Common myeloid progenitor, CD34-positive (primary cell): ENCODE measurements at regions of chr11 and their contacts with region 1.

Region 1: DNA sequence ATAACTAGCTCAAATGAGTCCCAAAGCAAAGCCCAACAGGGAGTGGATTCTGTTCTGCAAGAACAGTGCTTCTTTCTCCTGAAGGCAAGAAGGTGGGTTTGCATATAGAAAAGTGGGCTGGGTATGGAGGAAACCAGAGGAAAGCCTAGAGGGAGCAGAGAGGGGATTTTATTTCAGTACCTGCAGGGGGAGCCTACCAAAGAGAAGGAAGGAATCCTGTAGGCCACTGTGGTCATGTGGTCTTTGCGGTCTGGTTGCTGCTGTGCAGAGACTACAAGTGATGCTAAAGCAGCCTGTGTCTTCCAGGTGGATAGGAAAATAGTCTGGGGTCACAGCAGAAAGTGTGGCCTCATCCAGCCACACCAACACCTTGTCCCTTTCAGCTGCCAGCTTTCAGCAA is 33.2 kb upstream of the ZBTB16 start:
- DNase-seq: peak; percentile 76 to 87 (median 87)
- H3K4me3 ChIP-seq: no peak overlapping the region
- H3K27ac ChIP-seq: no peak overlapping the region
- H3K4me1 ChIP-seq: no peaks in the 10 kb centered on the region
- H3K27me3 ChIP-seq: peaks cover 0 to 10% (median 0%) of the 10 kb centered on the region in 5 experiments

Region 2: GRCh38 chr11:114044042-114044871 is 17.9 kb after region 1 on chr11:
- CTCF ChIA-PET with region 1: interaction called, 18 read pairs
- POLR2A ChIA-PET with region 1: no interaction called
- DNase-seq: no peak
- H3K4me3 ChIP-seq: no peak overlapping the region
- H3K27ac ChIP-seq: no peak overlapping the region
- H3K4me1 ChIP-seq: peaks cover 0 to 2% (median 0%) of the 10 kb centered on the region in 4 experiments
- H3K27me3 ChIP-seq: no peaks in the 10 kb centered on the region